CD8-positive, alpha-beta T cell (primary cell): ENCODE measurements at regions of chr3 and their contacts with region 1.

Region 1: GRCh38 chr3:47578119-47578632 is 489 bp downstream of the CSPG5 start:
- DNase-seq: peak in 7 of 9 experiments; percentile 9 to 65 (median 41)
- ATAC-seq: peak; percentile 74
- H3K4me3 ChIP-seq: peak overlapping the region; percentile 33 to 37
- H3K4me3 Mint-ChIP-seq: peak overlapping the region; percentile 75
- H3K27ac ChIP-seq: no peak overlapping the region
- H3K27ac Mint-ChIP-seq: no peak overlapping the region
- H3K4me1 ChIP-seq: peaks cover 7% of the 10 kb centered on the region
- H3K4me1 Mint-ChIP-seq: no peaks in the 10 kb centered on the region
- H3K27me3 ChIP-seq: peaks cover 7 to 12% of the 10 kb centered on the region in 2 experiments
- H3K27me3 Mint-ChIP-seq: peaks cover 24% of the 10 kb centered on the region
- CTCF ChIP-seq: no peak

Region 2: GRCh38 chr3:48088749-48089466 is 510.7 kb after region 1 on chr3:
- CTCF ChIA-PET with region 1: no interaction called
- POLR2A ChIA-PET with region 1: no interaction called
- intact Hi-C with region 1: loop called in 1 of 2 experiments (anchors 5 kb)
- DNase-seq: peak; percentile 89 to 97 (median 94)
- ATAC-seq: peak; percentile 91
- H3K4me3 ChIP-seq: peak overlapping the region; percentile 80 to 100
- H3K4me3 Mint-ChIP-seq: peak overlapping the region; percentile 96
- H3K27ac ChIP-seq: peak overlapping the region; percentile 86 to 95
- H3K27ac Mint-ChIP-seq: peak overlapping the region; percentile 98
- H3K4me1 ChIP-seq: peaks cover 18% of the 10 kb centered on the region
- H3K4me1 Mint-ChIP-seq: peaks cover 33% of the 10 kb centered on the region
- H3K27me3 ChIP-seq: no peaks in the 10 kb centered on the region
- H3K27me3 Mint-ChIP-seq: no peaks in the 10 kb centered on the region
- CTCF ChIP-seq: no peak